Naive thymus-derived CD4-positive, alpha-beta T cell (primary cell): ENCODE measurements at regions of chr12 and their contacts with region 1.

Region 1: GRCh38 chr12:89971881-89972280 is 263.2 kb upstream of the ATP2B1 start:
- DNase-seq: no peak
- ATAC-seq: no peak
- H3K4me3 ChIP-seq: no peak overlapping the region
- H3K4me3 Mint-ChIP-seq: no peak overlapping the region
- H3K27ac ChIP-seq: no peak overlapping the region
- H3K27ac Mint-ChIP-seq: no peak overlapping the region
- H3K4me1 ChIP-seq: no peaks in the 10 kb centered on the region
- H3K4me1 Mint-ChIP-seq: peaks cover 0 to 21% (median 5%) of the 10 kb centered on the region in 7 donors
- H3K27me3 ChIP-seq: no peaks in the 10 kb centered on the region
- H3K27me3 Mint-ChIP-seq: peaks cover 0 to 10% (median 5%) of the 10 kb centered on the region in 5 donors

Region 2: GRCh38 chr12:90085494-90086274 is 113.8 kb after region 1 on chr12:
- CTCF ChIA-PET with region 1: no interaction called
- POLR2A ChIA-PET with region 1: no interaction called
- intact Hi-C with region 1: loop called in 1 of 2 experiments (anchors 10 kb)
- DNase-seq: no peak
- ATAC-seq: no peak
- H3K4me3 ChIP-seq: no peak overlapping the region
- H3K4me3 Mint-ChIP-seq: no peak overlapping the region
- H3K27ac ChIP-seq: no peak overlapping the region
- H3K27ac Mint-ChIP-seq: no peak overlapping the region
- H3K4me1 ChIP-seq: no peaks in the 10 kb centered on the region
- H3K4me1 Mint-ChIP-seq: peaks cover 0 to 7% (median 3%) of the 10 kb centered on the region in 7 donors
- H3K27me3 ChIP-seq: no peaks in the 10 kb centered on the region
- H3K27me3 Mint-ChIP-seq: no peaks in the 10 kb centered on the region